ENCODE measurements at regions of chr9 and their contacts with region 1.

Region 1: DNA sequence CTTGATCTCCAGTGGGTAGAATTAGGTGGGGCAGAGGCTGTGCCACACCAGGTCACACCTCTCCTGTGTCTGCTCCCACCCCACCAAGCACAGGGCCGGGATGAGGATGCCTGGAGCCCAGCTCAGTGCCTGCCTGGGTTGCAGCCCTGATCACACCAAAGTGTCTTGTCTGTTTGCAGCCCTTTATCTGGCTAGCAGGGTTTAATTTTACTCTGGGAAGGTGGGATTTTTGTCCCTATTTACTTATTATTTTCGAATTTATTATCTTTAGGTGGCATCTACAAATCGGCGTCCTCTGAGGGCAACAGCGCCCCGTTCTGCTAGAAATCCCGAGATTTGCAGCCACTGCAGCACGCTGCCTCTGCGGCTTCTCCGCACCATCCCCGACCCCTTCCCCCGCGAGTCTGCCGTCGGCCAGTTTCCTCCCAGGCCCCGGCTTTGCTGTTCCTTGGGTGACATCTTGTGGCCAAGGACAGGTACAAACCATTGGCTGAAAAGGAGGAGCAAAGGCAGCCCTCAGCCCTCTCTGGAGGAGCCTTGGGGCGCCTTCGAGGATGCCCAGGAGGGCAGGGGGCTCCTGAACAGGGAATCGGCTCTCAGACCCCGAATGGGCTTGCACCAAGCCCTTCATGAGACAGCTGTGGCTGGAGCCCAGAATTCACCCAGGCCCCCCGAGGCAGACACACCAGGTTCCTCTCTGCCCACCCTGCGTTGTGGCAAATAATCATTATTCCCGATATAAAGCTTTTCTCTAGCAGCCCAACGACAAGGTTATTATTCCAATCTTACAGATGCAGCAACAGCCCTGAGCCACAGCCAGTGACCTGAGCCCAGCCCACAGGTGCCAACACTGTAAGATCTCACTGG is 113.0 kb downstream of the GAPVD1 start:
- DNase-seq: peak; percentile 79 to 82 (median 81)
- ATAC-seq: peak; percentile 95
- H3K4me3 ChIP-seq: peak overlapping the region; percentile 12; the same call in 1 of the 2 replicates
- H3K27ac ChIP-seq: no peak overlapping the region
- H3K4me1 ChIP-seq: peaks cover 8 to 19% of the 10 kb centered on the region in 2 experiments; a peak in 4 of 5 replicates
- H3K27me3 ChIP-seq: no peaks in the 10 kb centered on the region
- CTCF ChIP-seq: peak; percentile 81 to 89 (median 88)
- EP300 ChIP-seq: no peak
- POLR2A ChIP-seq: no peak
- RAD21 ChIP-seq: peak; percentile 91 to 93

Region 2: GRCh38 chr9:124771021-124771866 is 603.4 kb before region 1 on chr9 and contains the start of gene NR6A1:
- CTCF ChIA-PET with region 1: interaction called, 18 read pairs
- POLR2A ChIA-PET with region 1: interaction called, 3 read pairs
- in situ Hi-C with region 1: loop called (anchors 5 kb)
- intact Hi-C with region 1: loop called (anchors 2 kb)
- DNase-seq: peak; percentile 95 to 98 (median 96)
- ATAC-seq: peak; percentile 86
- H3K4me3 ChIP-seq: peak within 1 kb of the TSS; percentile 48
- H3K27ac ChIP-seq: peak within 1 kb of the TSS; percentile 93
- H3K4me1 ChIP-seq: peaks cover 11 to 14% of the 10 kb centered on the region in 2 experiments
- H3K27me3 ChIP-seq: no peaks in the 10 kb centered on the region
- CTCF ChIP-seq: peak; percentile 16 to 33 (median 22); a peak in 3 of 6 replicates
- EP300 ChIP-seq: 0 out of 2 replicates have a peak, but pooled peaks have one; percentile 3
- POLR2A ChIP-seq: peak; percentile 60
- RAD21 ChIP-seq: no peak
- polyA plus RNA-seq, gene NR6A1: 9.7 to 17.7 TPM

Region 3: DNA sequence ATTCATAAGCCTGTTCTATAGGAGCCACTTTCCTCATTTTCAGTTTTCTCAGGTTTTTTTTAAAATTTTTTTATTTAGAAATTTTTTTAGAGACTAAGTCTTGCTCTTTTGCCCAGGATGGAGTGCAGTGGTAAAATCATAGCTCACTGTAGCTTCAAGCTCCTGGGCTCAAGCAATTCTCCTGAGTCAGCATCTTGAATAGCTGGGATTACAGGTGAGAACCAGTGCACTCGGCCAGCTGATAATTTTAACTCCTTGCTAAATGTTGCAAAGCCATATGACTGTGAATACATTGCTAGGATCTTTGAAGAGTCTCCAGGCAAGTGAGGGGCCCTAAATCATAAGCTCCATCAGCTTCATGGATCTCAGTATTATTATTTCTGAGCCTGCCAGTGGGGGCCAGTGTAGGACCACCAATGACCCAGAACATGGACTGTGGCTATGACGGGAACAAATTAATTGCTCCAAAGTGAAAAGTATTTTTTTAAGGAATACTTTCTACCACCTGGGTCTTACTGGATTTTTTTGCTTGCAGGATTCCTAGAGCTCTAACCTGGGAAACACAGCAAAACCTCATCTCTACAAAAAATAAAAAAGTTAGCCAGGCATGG is 118.8 kb before region 1 on chr9:
- CTCF ChIA-PET with region 1: no interaction called
- POLR2A ChIA-PET with region 1: interaction called, 4 read pairs
- in situ Hi-C with region 1: loop called (anchors 5 kb)
- intact Hi-C with region 1: loop called (anchors 1 kb)
- DNase-seq: peak; percentile 43 to 61 (median 50)
- ATAC-seq: peak; percentile 89
- H3K4me3 ChIP-seq: no peak overlapping the region
- H3K27ac ChIP-seq: no peak overlapping the region
- H3K4me1 ChIP-seq: peaks cover 8 to 10% of the 10 kb centered on the region in 2 experiments; a peak in 4 of 5 replicates
- H3K27me3 ChIP-seq: no peaks in the 10 kb centered on the region
- CTCF ChIP-seq: peak; percentile 49 to 76 (median 74)
- EP300 ChIP-seq: no peak
- POLR2A ChIP-seq: no peak
- RAD21 ChIP-seq: peak; percentile 61 to 77

Region 4: DNA sequence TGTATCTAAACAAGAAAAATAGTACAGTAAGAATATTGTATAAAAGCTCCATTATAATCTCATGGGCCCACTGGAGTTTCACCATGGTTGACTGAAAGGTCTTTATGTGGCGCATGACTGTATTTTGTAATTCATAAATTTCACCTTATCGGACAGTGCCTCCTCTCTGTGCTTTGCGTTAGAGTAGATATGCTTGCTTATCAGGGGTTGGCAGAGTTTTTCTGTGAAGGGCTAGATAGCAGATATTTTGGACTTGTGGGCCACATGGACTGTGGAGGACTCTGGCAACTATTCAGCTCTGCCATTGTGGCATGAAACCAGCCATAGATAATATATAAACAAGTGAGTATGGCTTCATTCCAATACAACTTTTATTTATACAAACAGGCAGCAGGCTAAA is 89.8 kb before region 1 on chr9:
- CTCF ChIA-PET with region 1: no interaction called
- POLR2A ChIA-PET with region 1: no interaction called
- in situ Hi-C with region 1: no loop called
- intact Hi-C with region 1: no loop called
- DNase-seq: peak; percentile 75 to 95 (median 80)
- ATAC-seq: peak; percentile 86
- H3K4me3 ChIP-seq: no peak overlapping the region
- H3K27ac ChIP-seq: peak overlapping the region; percentile 81
- H3K4me1 ChIP-seq: peaks cover 25 to 41% of the 10 kb centered on the region in 2 experiments
- H3K27me3 ChIP-seq: no peaks in the 10 kb centered on the region
- CTCF ChIP-seq: no peak
- EP300 ChIP-seq: peak; percentile 100
- POLR2A ChIP-seq: no peak
- RAD21 ChIP-seq: peak in 1 of 2 experiments; percentile 23; a peak in 1 of 4 replicates

Region 5: DNA sequence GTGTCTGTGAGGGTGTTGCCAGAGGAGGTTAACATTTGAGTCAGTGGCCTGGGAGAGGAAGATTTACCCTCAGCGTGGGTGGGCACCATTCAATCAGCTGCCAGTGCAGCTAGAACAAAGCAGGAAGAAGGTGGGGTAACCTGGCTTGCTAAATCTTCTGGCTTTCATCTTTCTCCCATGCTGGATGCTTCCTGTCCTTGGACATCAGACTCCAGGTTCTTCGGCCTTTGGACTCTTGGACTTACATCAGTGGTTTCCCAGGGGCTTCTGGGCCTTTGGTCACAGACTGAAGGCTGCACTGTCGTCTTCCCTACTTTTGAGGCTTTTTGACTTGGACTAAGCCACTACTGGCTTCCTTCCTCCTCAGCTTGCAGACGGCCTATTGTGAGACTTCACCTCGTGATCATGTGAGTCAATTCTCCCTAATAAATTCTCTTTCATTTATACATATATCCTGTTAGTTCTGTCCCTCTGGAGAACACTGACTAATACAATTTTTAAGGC is 410.6 kb after region 1 on chr9:
- CTCF ChIA-PET with region 1: no interaction called
- POLR2A ChIA-PET with region 1: no interaction called
- in situ Hi-C with region 1: no loop called
- intact Hi-C with region 1: no loop called
- DNase-seq: no peak
- ATAC-seq: no peak
- H3K4me3 ChIP-seq: no peak overlapping the region
- H3K27ac ChIP-seq: no peak overlapping the region
- H3K4me1 ChIP-seq: no peaks in the 10 kb centered on the region; a peak in 1 of 5 replicates
- H3K27me3 ChIP-seq: peaks cover 2 to 6% of the 10 kb centered on the region in 2 experiments; a peak in 3 of 5 replicates
- CTCF ChIP-seq: no peak
- EP300 ChIP-seq: no peak
- POLR2A ChIP-seq: no peak
- RAD21 ChIP-seq: no peak

Region 6: GRCh38 chr9:126009047-126009446 is 634.4 kb after region 1 on chr9:
- CTCF ChIA-PET with region 1: no interaction called
- POLR2A ChIA-PET with region 1: no interaction called
- in situ Hi-C with region 1: no loop called
- intact Hi-C with region 1: no loop called
- DNase-seq: peak in 3 of 4 experiments; percentile 4 to 40 (median 27)
- ATAC-seq: no peak
- H3K4me3 ChIP-seq: no peak overlapping the region
- H3K27ac ChIP-seq: no peak overlapping the region
- H3K4me1 ChIP-seq: no peaks in the 10 kb centered on the region
- H3K27me3 ChIP-seq: peaks cover 0 to 8% of the 10 kb centered on the region in 2 experiments; a peak in 1 of 5 replicates
- CTCF ChIP-seq: peak; percentile 13 to 39 (median 33); a peak in 3 of 6 replicates
- EP300 ChIP-seq: no peak
- POLR2A ChIP-seq: no peak
- RAD21 ChIP-seq: peak in 1 of 2 experiments; percentile 18; a peak in 1 of 4 replicates